Left lung (tissue), 14 donors: ENCODE measurements at regions of chr11 and their contacts with region 1.

Region 1: GRCh38 chr11:6022956-6023355 is 7.6 kb downstream of the OR56A1 start:
- DNase-seq: peak in 2 of 4 donors; percentile 18 to 62
- ATAC-seq: peak; percentile 84
- H3K4me3 ChIP-seq: no peak overlapping the region
- H3K27ac ChIP-seq: no peak overlapping the region
- H3K4me1 ChIP-seq: no peaks in the 10 kb centered on the region
- H3K27me3 ChIP-seq: no peaks in the 10 kb centered on the region
- CTCF ChIP-seq: peak; percentile 32 to 54

Region 2: DNA sequence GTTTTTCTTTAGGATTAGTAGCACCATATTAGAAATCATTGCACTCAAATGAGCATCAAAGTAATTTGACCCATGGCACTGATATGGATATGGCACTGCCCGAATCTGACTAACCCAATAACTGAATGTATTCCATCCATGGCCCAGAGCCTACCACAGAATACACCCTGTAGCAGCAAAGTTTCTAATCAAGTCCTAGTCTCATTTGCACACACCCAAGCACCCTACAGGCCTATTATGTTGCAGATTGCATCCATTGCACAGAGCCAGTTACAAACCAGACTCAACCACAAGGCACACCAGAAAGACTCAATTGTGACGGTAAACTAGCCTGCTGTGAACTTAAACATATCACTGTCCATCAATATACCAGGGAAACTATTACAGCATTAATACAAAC is 123.4 kb before region 1 on chr11:
- intact Hi-C with region 1: no loop called
- DNase-seq: no peak
- ATAC-seq: no peak
- H3K4me3 ChIP-seq: no peak overlapping the region
- H3K27ac ChIP-seq: no peak overlapping the region
- H3K4me1 ChIP-seq: no peaks in the 10 kb centered on the region
- H3K27me3 ChIP-seq: no peaks in the 10 kb centered on the region
- CTCF ChIP-seq: no peak

Region 3: DNA sequence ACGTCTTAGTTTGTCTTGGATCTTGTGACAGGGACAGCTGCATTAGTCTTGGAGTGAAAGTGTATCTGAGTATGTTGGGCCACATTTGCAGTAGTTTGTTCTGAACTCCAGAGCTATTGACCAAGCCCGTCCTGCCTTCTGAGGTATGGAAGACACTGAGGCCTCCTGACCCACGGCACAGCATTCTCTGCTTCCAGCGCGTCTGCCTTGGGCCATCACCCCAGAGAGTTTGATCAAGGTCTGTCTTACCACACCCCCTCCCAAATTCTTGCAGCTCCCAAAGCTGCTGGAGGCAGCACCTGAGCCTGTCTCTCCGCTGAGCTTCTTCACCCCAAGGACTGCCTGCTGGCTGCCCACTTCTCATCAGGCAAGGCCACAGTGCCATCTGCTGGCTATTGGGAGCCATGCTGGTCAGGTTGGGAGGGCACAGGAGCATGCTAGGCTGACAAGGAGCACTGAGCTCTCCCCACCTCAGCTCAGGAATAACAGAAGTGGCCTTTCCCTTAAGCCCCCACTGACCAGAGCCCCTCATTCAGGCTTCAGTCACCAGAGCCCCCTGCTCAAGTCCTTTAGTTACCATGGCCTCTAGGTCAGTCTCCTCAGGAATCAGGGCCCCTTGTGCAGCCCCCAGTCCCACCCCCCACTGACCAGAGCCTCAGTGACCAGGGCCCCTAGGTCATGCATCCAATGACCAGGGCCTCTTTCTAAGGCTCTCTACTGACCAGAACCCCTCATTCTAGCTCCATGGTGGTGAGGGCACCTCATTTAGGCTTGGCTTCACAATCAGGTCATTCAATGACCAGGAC is 340.1 kb after region 1 on chr11:
- intact Hi-C with region 1: loop called in 1 of 2 experiments (anchors 5 kb)
- DNase-seq: peak; percentile 55 to 86 (median 80)
- ATAC-seq: peak; percentile 100
- H3K4me3 ChIP-seq: no peak overlapping the region
- H3K27ac ChIP-seq: no peak overlapping the region
- H3K4me1 ChIP-seq: peaks cover 0 to 4% of the 10 kb centered on the region in 2 donors
- H3K27me3 ChIP-seq: no peaks in the 10 kb centered on the region
- CTCF ChIP-seq: peak; percentile 81 to 87